T-cell (primary cell): ENCODE measurements at regions of chr11 and their contacts with region 1.

Region 1: GRCh38 chr11:118806400-118806799 is 15.4 kb upstream of the DDX6 start:
- DNase-seq: no peak
- ATAC-seq: no peak
- H3K4me3 ChIP-seq: no peak overlapping the region
- H3K4me3 Mint-ChIP-seq: no peak overlapping the region
- H3K27ac ChIP-seq: no peak overlapping the region
- H3K27ac Mint-ChIP-seq: no peak overlapping the region
- H3K4me1 ChIP-seq: peaks cover 0 to 4% of the 10 kb centered on the region in 2 experiments
- H3K4me1 Mint-ChIP-seq: peaks cover 13 to 23% (median 19%) of the 10 kb centered on the region in 3 donors
- H3K27me3 ChIP-seq: no peaks in the 10 kb centered on the region
- H3K27me3 Mint-ChIP-seq: peaks cover 0 to 3% of the 10 kb centered on the region in 2 donors

Region 2: GRCh38 chr11:118768690-118769089 is 37.7 kb before region 1 on chr11:
- CTCF ChIA-PET with region 1: interaction called in 1 of 2 experiments, 4 read pairs
- POLR2A ChIA-PET with region 1: interaction called, 5 to 10 read pairs
- DNase-seq: no peak
- ATAC-seq: no peak
- H3K4me3 ChIP-seq: no peak overlapping the region
- H3K4me3 Mint-ChIP-seq: peak overlapping the region in 2 of 3 donors; percentile 2 to 22
- H3K27ac ChIP-seq: no peak overlapping the region
- H3K27ac Mint-ChIP-seq: peak overlapping the region; percentile 48 to 53
- H3K4me1 ChIP-seq: peaks cover 29 to 39% of the 10 kb centered on the region in 2 experiments
- H3K4me1 Mint-ChIP-seq: peaks cover 69 to 72% (median 71%) of the 10 kb centered on the region in 3 donors
- H3K27me3 ChIP-seq: no peaks in the 10 kb centered on the region
- H3K27me3 Mint-ChIP-seq: no peaks in the 10 kb centered on the region